CD14-positive monocyte (primary cell): ENCODE measurements at regions of chr6 and their contacts with region 1.

Region 1: DNA sequence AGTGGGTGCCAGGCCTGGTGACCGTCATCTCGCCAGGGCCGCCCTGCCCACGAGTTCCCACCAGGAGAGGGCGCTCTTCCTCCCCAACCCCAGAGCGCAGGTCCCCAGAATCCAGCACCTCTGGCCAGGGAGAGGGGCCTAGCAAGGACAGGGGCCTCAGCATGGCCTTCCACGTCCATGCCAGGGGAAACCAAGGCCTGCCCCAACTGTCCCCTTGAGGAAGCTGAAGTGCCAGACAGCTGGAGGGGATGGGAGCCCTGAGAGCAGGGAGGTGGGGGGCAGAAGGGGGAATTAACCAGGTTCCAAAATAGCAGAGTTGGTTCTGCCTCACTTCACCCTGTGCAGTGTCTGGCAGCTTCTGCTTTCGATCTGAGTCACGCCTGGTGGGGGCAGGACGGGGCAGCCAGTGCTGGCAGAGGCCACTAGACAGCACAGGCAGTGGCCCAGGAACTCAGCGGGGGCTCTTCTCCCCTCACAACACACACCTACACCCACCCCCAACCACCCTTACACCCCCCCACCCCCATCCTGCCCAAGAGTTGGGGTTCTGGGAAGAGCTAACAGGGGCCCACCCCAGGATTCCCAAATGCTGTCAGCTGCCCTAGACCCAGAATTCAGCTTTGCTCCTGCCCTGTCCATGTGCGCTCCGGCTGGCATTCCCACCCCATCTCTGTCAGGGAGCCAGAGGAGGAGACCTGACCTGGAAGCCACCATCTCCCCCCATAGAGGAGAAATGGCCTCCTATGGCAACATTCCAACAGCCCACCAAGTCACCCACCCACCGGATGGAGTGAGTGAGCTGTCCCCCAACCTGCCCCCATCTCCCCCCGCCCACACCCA is 29.2 kb downstream of the TFEB start:
- DNase-seq: peak; percentile 90 to 94 (median 92)
- H3K4me3 ChIP-seq: peak overlapping the region in 2 of 3 experiments; percentile 6 to 66
- H3K4me3 Mint-ChIP-seq: peak overlapping the region; percentile 61 to 82
- H3K27ac ChIP-seq: peak overlapping the region; percentile 87 to 89
- H3K27ac Mint-ChIP-seq: peak overlapping the region; percentile 92 to 97 (median 95)
- H3K4me1 ChIP-seq: peaks cover 49 to 54% of the 10 kb centered on the region in 2 donors
- H3K4me1 Mint-ChIP-seq: peaks cover 65% of the 10 kb centered on the region
- H3K27me3 ChIP-seq: no peaks in the 10 kb centered on the region
- H3K27me3 Mint-ChIP-seq: no peaks in the 10 kb centered on the region
- CTCF ChIP-seq: peak; percentile 98

Region 2: DNA sequence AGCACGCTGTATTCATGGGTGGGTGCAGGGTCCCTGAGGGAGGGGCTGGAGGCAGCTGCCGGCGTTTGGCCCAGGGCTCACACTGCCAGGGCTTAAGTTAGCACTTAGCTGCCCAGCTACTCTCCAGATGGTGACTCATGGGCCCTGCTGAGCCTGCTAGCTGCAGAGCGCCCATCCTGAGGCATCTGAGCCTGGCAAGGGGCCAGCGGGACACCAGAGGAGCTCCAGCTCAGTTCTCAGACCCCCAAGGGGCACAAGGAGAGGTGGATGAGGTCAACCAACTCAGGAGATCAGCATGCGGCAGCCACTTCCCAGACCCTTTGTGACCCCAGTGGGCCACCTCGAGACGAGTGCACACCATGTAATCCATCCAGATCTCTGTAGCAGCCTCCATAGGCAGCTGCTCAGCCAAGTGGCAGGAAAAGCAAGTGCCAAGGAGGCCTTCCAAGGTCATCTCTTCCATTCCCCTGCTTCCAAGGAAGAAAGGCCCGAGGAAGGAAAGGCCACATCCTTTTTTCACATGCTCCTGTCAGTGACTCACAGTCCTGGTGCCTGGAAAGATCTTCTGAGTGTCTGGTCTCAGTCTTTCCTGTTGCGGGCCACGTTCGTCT is 124.7 kb before region 1 on chr6:
- intact Hi-C with region 1: no loop called
- DNase-seq: no peak
- H3K4me3 ChIP-seq: no peak overlapping the region
- H3K4me3 Mint-ChIP-seq: no peak overlapping the region
- H3K27ac ChIP-seq: no peak overlapping the region
- H3K27ac Mint-ChIP-seq: no peak overlapping the region
- H3K4me1 ChIP-seq: no peaks in the 10 kb centered on the region
- H3K4me1 Mint-ChIP-seq: peaks cover 13% of the 10 kb centered on the region
- H3K27me3 ChIP-seq: no peaks in the 10 kb centered on the region
- H3K27me3 Mint-ChIP-seq: peaks cover 0 to 5% (median 0%) of the 10 kb centered on the region in 3 donors
- CTCF ChIP-seq: no peak

Region 3: DNA sequence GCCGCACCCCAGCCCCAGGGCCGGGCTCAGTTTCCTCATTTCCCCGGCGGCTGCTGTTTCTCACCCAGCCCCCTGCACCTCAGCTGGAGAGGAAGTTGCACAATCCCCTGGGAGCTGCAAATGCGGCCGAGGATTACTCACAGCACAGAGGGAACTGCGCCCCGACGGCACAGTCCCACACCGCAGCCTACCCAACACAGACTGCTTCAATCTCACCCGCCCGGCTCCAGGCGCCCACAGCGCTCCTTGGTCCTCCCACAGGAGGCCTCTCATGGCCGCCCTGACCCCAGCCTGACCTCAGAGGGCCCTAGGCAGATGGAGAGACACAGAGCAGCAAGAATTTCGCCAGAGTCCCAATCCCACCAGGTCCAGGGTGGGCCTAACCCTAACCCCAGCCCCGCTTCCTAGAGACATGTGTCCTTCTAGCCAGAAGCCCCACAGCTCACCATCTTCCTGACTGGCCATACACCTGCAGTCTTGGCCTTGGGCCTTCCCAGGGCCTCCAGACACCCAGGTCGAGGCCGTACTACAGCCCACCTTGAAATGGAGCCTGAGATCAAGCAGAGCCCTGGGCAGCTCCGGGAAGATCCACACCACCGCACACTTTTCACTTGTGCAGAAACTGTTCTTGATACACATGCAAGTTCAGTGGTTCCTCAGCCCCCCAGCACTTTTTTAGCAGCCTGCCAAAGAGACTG is 17.5 kb after region 1 on chr6:
- intact Hi-C with region 1: loop called (anchors 1 to 2 kb)
- DNase-seq: peak; percentile 96 to 98 (median 98)
- H3K4me3 ChIP-seq: peak overlapping the region; percentile 43 to 79 (median 49)
- H3K4me3 Mint-ChIP-seq: peak overlapping the region; percentile 81 to 93
- H3K27ac ChIP-seq: peak overlapping the region; percentile 81 to 88
- H3K27ac Mint-ChIP-seq: peak overlapping the region; percentile 97 to 99 (median 98)
- H3K4me1 ChIP-seq: peaks cover 90 to 98% of the 10 kb centered on the region in 2 donors
- H3K4me1 Mint-ChIP-seq: peaks cover 92% of the 10 kb centered on the region
- H3K27me3 ChIP-seq: no peaks in the 10 kb centered on the region
- H3K27me3 Mint-ChIP-seq: peaks cover 0 to 1% (median 0%) of the 10 kb centered on the region in 3 donors
- CTCF ChIP-seq: no peak

Region 4: GRCh38 chr6:41779793-41780545 is 73.8 kb after region 1 on chr6 and contains the start of gene FRS3:
- intact Hi-C with region 1: loop called (anchors 5 to 10 kb)
- DNase-seq: peak; percentile 94 to 96 (median 95)
- H3K4me3 ChIP-seq: peak within 1 kb of the TSS; percentile 61 to 84 (median 80)
- H3K4me3 Mint-ChIP-seq: peak within 1 kb of the TSS; percentile 89 to 92
- H3K27ac ChIP-seq: peak within 1 kb of the TSS in 1 of 2 donors; percentile 57
- H3K27ac Mint-ChIP-seq: peak within 1 kb of the TSS in 6 of 7 donors; percentile 56 to 91 (median 83)
- H3K4me1 ChIP-seq: peaks cover 56 to 74% of the 10 kb centered on the region in 2 donors
- H3K4me1 Mint-ChIP-seq: peaks cover 59% of the 10 kb centered on the region
- H3K27me3 ChIP-seq: peaks cover 0 to 3% of the 10 kb centered on the region in 2 donors
- H3K27me3 Mint-ChIP-seq: peaks cover 3 to 13% (median 6%) of the 10 kb centered on the region in 3 donors
- CTCF ChIP-seq: peak; percentile 78
- polyA plus RNA-seq, gene FRS3: 1.3 to 7.0 (median 2.6) TPM